Endothelial cell of umbilical vein (primary cell): ENCODE measurements at regions of chr11 and their contacts with region 1.

Region 1: GRCh38 chr11:3849297-3849874 is 6.1 kb upstream of the STIM1 start:
- DNase-seq: peak; percentile 51
- H3K4me3 ChIP-seq: no peak overlapping the region
- H3K27ac ChIP-seq: no peak overlapping the region
- H3K4me1 ChIP-seq: no peaks in the 10 kb centered on the region
- H3K27me3 ChIP-seq: peaks cover 0 to 3% of the 10 kb centered on the region in 2 experiments
- CTCF ChIP-seq: peak; percentile 51 to 59
- POLR2A ChIP-seq: no peak

Region 2: GRCh38 chr11:2269601-2270321 is 1579.6 kb before region 1 on chr11:
- CTCF ChIA-PET with region 1: no interaction called
- POLR2A ChIA-PET with region 1: no interaction called
- dilution Hi-C with region 1: no loop called
- intact Hi-C with region 1: no loop called
- DNase-seq: peak; percentile 31
- H3K4me3 ChIP-seq: no peak overlapping the region
- H3K27ac ChIP-seq: no peak overlapping the region
- H3K4me1 ChIP-seq: no peaks in the 10 kb centered on the region
- H3K27me3 ChIP-seq: peaks cover 33 to 37% of the 10 kb centered on the region in 2 experiments
- CTCF ChIP-seq: peak in 1 of 2 donors; percentile 33
- POLR2A ChIP-seq: no peak

Region 3: GRCh38 chr11:3775736-3776406 is 73.5 kb before region 1 on chr11:
- CTCF ChIA-PET with region 1: no interaction called
- POLR2A ChIA-PET with region 1: no interaction called
- dilution Hi-C with region 1: no loop called
- intact Hi-C with region 1: no loop called
- DNase-seq: no peak
- H3K4me3 ChIP-seq: no peak overlapping the region
- H3K27ac ChIP-seq: no peak overlapping the region
- H3K4me1 ChIP-seq: no peaks in the 10 kb centered on the region
- H3K27me3 ChIP-seq: no peaks in the 10 kb centered on the region
- CTCF ChIP-seq: no peak
- POLR2A ChIP-seq: no peak

Region 4: GRCh38 chr11:3807909-3808860 is 41.2 kb before region 1 on chr11 and contains the start of gene PGAP2:
- CTCF ChIA-PET with region 1: interaction called, 12 read pairs
- POLR2A ChIA-PET with region 1: no interaction called
- dilution Hi-C with region 1: no loop called
- intact Hi-C with region 1: no loop called
- DNase-seq: peak; percentile 57
- H3K4me3 ChIP-seq: peak within 1 kb of the TSS; percentile 62 to 93 (median 91)
- H3K27ac ChIP-seq: peak within 1 kb of the TSS; percentile 37
- H3K4me1 ChIP-seq: peaks cover 11% of the 10 kb centered on the region
- H3K27me3 ChIP-seq: no peaks in the 10 kb centered on the region
- CTCF ChIP-seq: peak; percentile 53 to 83
- POLR2A ChIP-seq: no peak
- total RNA-seq, gene PGAP2: 18.3 and 18.5 TPM in 2 replicates

Region 5: DNA sequence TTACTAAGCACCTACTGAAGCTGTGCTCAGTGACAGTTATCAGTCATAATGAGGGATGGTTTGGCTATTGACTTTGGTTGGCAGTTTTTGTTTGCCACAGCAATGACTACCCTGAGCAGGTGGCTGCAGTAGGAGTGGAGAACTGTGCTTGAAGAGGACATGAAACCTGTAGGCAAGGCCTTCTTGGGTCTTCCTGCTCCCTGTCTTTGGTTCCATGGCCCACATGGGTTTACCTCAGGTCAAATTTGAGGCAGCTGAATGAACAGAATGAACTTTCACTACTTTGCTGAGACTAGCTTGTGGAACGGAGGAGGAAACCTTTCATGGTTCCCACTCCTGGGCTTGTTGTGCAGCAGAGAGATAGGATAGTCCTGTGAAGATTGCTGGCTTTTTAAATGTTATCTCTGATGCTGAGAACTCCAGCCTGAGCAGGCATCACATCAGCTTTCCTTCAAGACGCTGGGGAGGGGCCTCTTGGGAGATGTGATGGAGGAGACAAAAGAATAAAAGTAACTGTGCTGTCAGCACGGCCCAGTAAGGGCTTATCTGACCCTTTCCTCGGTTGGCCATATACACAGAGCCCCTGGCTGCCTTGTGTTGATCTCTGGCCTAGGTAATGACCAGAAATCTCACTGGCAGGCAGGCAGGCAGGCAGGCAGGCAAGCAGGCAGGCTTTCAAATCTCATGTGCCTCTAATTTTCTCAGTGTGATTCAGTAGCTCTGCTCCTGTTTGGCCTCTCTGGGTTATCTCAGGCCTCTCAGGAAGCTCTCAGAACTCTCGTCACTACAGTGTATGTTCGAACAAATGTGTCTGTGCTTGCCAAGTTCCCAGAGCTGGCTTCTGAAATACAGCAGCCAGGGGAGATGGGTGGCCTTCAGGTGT is 18.1 kb after region 1 on chr11:
- CTCF ChIA-PET with region 1: interaction called, 35 read pairs
- POLR2A ChIA-PET with region 1: interaction called, 4 read pairs
- dilution Hi-C with region 1: no loop called
- intact Hi-C with region 1: no loop called
- DNase-seq: peak; percentile 76
- H3K4me3 ChIP-seq: no peak overlapping the region
- H3K27ac ChIP-seq: peak overlapping the region; percentile 78
- H3K4me1 ChIP-seq: peaks cover 38% of the 10 kb centered on the region
- H3K27me3 ChIP-seq: no peaks in the 10 kb centered on the region
- CTCF ChIP-seq: no peak
- POLR2A ChIP-seq: no peak

Region 6: GRCh38 chr11:3927133-3927796 is 77.9 kb after region 1 on chr11:
- CTCF ChIA-PET with region 1: interaction called, 31 read pairs
- POLR2A ChIA-PET with region 1: no interaction called
- dilution Hi-C with region 1: no loop called
- intact Hi-C with region 1: no loop called
- DNase-seq: no peak
- H3K4me3 ChIP-seq: no peak overlapping the region
- H3K27ac ChIP-seq: no peak overlapping the region
- H3K4me1 ChIP-seq: no peaks in the 10 kb centered on the region
- H3K27me3 ChIP-seq: no peaks in the 10 kb centered on the region
- CTCF ChIP-seq: no peak
- POLR2A ChIP-seq: no peak

Region 7: GRCh38 chr11:3971756-3972404 is 122.5 kb after region 1 on chr11:
- CTCF ChIA-PET with region 1: interaction called, 10 read pairs
- POLR2A ChIA-PET with region 1: no interaction called
- dilution Hi-C with region 1: no loop called
- intact Hi-C with region 1: no loop called
- DNase-seq: no peak
- H3K4me3 ChIP-seq: no peak overlapping the region
- H3K27ac ChIP-seq: no peak overlapping the region
- H3K4me1 ChIP-seq: no peaks in the 10 kb centered on the region
- H3K27me3 ChIP-seq: no peaks in the 10 kb centered on the region
- CTCF ChIP-seq: no peak
- POLR2A ChIP-seq: no peak

Region 8: GRCh38 chr11:4025248-4025966 is 176.0 kb after region 1 on chr11:
- CTCF ChIA-PET with region 1: interaction called, 48 read pairs
- POLR2A ChIA-PET with region 1: interaction called, 4 read pairs
- dilution Hi-C with region 1: no loop called
- intact Hi-C with region 1: no loop called
- DNase-seq: peak; percentile 95
- H3K4me3 ChIP-seq: peak overlapping the region in 1 of 3 experiments; percentile 28
- H3K27ac ChIP-seq: peak overlapping the region; percentile 80
- H3K4me1 ChIP-seq: peaks cover 23% of the 10 kb centered on the region
- H3K27me3 ChIP-seq: no peaks in the 10 kb centered on the region
- CTCF ChIP-seq: no peak
- POLR2A ChIP-seq: no peak

Region 9: DNA sequence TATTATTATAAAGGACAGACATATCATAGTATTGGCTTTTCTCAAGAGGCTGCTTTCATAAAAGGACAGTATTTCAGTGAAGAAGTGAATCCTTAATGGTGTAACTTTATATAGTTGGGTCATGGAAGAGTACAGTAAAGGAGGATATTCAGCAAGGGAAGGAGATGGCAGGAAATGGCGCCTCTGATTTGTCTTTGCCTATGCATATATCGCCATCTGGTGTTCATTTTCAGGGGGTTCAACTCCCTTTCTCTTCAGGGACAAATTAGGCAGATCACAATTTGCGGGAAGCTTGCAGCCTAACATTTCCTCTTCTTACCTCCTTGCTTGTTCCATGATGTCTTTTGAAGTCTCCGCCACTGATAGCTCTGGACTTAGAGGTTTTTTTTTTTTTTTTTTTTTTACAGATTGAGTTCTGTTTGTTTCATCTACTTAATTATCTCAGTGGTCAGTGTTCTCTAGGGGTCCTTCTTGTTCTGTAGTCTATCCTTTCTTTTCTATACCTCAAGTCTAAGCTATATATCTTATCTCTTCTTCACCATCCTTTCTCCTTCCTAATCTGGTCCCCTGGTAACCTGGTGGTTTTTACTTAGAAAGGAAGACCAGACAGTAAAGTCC is 223.4 kb after region 1 on chr11:
- CTCF ChIA-PET with region 1: interaction called, 871 read pairs
- POLR2A ChIA-PET with region 1: no interaction called
- dilution Hi-C with region 1: loop called (anchors 25 kb)
- intact Hi-C with region 1: loop called (anchors 1 kb)
- DNase-seq: peak; percentile 79
- H3K4me3 ChIP-seq: no peak overlapping the region
- H3K27ac ChIP-seq: no peak overlapping the region
- H3K4me1 ChIP-seq: no peaks in the 10 kb centered on the region
- H3K27me3 ChIP-seq: no peaks in the 10 kb centered on the region
- CTCF ChIP-seq: peak; percentile 59 to 64
- POLR2A ChIP-seq: no peak